AG04449 (cell line): ENCODE measurements at regions of chr1 and their contacts with region 1.

Region 1: DNA sequence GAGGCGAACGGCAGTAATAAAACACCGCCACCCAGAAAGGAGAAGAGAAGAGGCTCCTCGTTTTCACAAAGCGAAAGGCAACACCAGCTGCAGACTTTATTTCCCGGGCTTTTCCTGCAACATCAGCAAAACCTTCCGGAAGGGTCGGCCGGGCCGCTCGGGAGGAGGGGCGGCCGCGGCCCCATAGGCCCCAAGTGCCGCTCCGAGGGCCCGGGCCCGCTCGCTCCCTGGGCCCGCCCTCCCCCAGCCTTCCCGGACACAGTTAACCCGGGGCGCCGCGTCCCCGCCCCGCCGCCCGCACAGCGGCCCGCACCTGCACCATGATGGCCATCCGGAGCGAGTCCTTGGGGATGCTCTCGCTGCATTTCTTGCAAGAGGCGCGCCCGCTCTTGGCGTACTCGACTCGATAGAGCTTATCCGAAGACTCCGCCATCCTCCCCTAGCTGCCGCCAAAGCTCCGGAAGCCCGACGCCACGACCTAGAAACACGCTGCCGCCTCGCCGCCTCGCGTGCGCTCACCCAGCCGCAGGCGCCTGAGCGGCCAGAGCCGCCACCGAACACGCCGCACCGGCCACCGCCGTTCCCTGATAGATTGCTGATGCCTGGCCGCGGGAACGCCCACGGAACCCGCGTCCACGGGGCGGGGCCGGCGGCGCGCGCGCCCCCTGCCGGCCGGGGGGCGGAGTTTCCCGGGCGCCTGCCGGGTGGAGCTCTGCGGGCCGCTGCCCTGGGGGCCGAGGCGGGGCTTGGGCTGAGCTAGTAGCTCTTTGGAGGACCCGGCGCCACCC is at the start of gene PARP1:
- DNase-seq: no peak
- H3K4me3 ChIP-seq: peak within 1 kb of the TSS; percentile 76
- CTCF ChIP-seq: peak; percentile 36

Region 2: GRCh38 chr1:226034482-226034881 is 373.2 kb before region 1 on chr1:
- CTCF ChIA-PET with region 1: no interaction called
- POLR2A ChIA-PET with region 1: no interaction called
- DNase-seq: peak; percentile 50
- H3K4me3 ChIP-seq: no peak overlapping the region
- CTCF ChIP-seq: no peak

Region 3: DNA sequence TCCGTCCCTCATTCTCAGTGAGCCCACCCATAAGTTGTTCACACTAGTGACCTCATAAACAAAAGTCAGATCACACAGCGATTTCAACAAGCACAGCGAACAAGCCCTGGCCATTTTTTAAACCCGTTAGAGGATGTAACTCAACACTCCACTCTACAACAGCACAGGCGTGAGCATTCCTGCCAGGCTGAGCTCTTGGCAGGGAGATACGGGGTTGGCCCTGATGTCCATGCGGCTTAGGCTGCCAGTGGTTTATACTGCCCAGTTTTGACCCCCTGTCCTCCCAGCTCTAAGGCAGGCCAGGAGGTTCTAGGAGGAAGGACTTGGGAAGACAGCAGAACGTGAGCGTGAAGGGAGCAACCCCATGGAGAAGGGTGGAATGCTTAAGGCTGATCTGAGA is 34.8 kb before region 1 on chr1:
- CTCF ChIA-PET with region 1: interaction called, 13 read pairs
- POLR2A ChIA-PET with region 1: no interaction called
- DNase-seq: no peak
- H3K4me3 ChIP-seq: no peak overlapping the region
- CTCF ChIP-seq: no peak

Region 4: GRCh38 chr1:226391186-226391585 is 16.5 kb before region 1 on chr1:
- CTCF ChIA-PET with region 1: interaction called, 11 read pairs
- POLR2A ChIA-PET with region 1: no interaction called
- DNase-seq: no peak
- H3K4me3 ChIP-seq: no peak overlapping the region
- CTCF ChIP-seq: no peak

Region 5: DNA sequence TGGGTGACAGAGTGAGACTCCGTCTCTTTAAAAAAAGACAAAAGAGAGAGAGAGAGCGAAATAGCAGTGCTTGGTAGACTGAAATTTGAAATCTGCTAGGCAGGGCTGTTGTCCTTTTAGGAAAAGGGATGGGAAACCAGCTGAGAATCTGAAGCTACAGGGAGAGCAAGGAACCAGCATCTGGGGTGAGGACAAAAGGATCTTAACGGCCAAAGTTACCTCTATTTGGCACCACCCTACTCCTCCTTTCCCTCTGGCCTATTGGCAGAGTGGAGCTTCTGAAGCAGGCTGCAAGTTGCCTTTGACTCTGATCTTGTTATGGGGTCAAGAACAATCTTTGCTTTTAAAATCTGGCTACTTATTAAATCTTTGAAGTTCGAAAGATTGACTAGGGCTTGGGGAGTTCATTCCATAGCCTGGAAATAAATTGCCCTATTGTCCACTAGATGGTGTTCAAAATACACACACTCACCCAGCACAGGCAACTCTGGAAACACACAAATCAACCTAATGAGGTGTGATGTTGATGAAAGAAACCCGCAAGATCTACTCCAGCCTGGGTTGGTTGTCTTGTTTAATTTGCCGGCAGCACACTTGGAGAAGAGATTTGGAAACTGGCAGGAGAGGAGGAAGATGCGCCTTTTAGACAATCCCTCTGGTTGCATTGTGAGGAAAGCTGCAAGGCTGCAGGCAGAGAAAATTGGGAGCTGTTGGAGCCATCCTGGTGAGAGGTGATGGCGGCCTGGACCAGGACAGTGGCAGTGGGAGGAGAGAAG is 16.7 kb after region 1 on chr1:
- CTCF ChIA-PET with region 1: interaction called, 116 read pairs
- POLR2A ChIA-PET with region 1: no interaction called
- DNase-seq: no peak
- H3K4me3 ChIP-seq: no peak overlapping the region
- CTCF ChIP-seq: peak; percentile 30

Region 6: GRCh38 chr1:226626577-226626956 is 218.9 kb after region 1 on chr1:
- CTCF ChIA-PET with region 1: no interaction called
- POLR2A ChIA-PET with region 1: no interaction called
- DNase-seq: no peak
- H3K4me3 ChIP-seq: no peak overlapping the region
- CTCF ChIP-seq: peak; percentile 86